PC-9 (cell line): ENCODE measurements at regions of chrX and their contacts with region 1.

Region 1: DNA sequence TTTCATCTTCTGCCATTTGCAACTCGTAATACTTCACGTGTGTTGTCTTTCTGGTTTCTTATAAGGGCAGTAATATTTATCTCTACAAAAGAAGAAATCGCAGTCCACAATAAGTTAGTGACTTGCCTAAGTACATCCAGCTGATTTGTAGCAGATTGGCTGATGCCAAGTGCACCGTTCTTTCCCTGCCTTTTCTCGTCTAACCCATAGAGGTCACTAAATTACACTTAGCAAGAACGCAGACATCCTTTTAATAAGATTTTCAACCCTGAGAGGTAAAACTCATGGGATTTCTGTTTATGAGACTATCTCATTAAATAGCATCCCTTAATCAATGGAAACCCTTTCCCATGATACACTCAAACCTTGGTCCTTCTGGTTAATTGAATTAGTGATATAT is 408.6 kb upstream of the ACTRT1 start:
- DNase-seq: no peak
- H3K4me3 ChIP-seq: no peak overlapping the region
- H3K27ac ChIP-seq: no peak overlapping the region
- H3K4me1 ChIP-seq: no peaks in the 10 kb centered on the region
- H3K27me3 ChIP-seq: no peaks in the 10 kb centered on the region
- CTCF ChIP-seq: 0 out of 2 replicates have a peak, but pooled peaks have one; percentile 15

Region 2: GRCh38 chrX:127085939-127086338 is 1374.9 kb before region 1 on chrX:
- CTCF ChIA-PET with region 1: no interaction called
- POLR2A ChIA-PET with region 1: interaction called, 15 read pairs
- intact Hi-C with region 1: no loop called
- DNase-seq: no peak
- H3K4me3 ChIP-seq: no peak overlapping the region
- H3K27ac ChIP-seq: no peak overlapping the region
- H3K4me1 ChIP-seq: no peaks in the 10 kb centered on the region
- H3K27me3 ChIP-seq: no peaks in the 10 kb centered on the region
- CTCF ChIP-seq: no peak

Region 3: DNA sequence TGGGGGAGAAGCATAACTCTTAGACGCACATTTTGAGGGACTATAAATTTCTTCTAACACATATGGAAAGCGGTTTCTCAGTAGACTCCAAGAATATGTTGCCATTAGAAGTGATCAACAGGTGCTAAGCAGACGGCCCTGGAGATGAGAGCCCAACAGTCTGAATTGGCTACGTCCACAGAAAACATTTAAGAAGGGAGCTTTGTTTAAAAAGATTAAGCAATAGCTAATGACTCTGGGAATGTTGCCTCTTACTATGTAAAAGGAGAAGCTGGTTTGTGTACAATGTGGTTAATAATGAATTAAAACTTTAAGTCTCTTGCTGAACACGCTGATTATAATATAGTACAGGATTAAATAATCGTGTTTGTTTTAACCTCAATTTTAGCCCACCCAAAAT is 663.0 kb after region 1 on chrX:
- CTCF ChIA-PET with region 1: no interaction called
- POLR2A ChIA-PET with region 1: no interaction called
- intact Hi-C with region 1: no loop called
- DNase-seq: no peak
- H3K4me3 ChIP-seq: no peak overlapping the region
- H3K27ac ChIP-seq: no peak overlapping the region
- H3K4me1 ChIP-seq: no peaks in the 10 kb centered on the region
- H3K27me3 ChIP-seq: peaks cover 12% of the 10 kb centered on the region; the same call in 1 of the 2 replicates
- CTCF ChIP-seq: no peak